Caco-2 (cell line): ENCODE measurements at regions of chr5 and their contacts with region 1.

Region 1: GRCh38 chr5:133111299-133111698 is 59.5 kb downstream of the HSPA4 start:
- DNase-seq: peak; percentile 77 to 85
- H3K4me3 ChIP-seq: no peak overlapping the region
- H3K4me3 Mint-ChIP-seq: no peak overlapping the region
- H3K27ac Mint-ChIP-seq: no peak overlapping the region
- H3K4me1 ChIP-seq: no peaks in the 10 kb centered on the region
- H3K4me1 Mint-ChIP-seq: peaks cover 8% of the 10 kb centered on the region
- H3K27me3 ChIP-seq: no peaks in the 10 kb centered on the region
- H3K27me3 Mint-ChIP-seq: no peaks in the 10 kb centered on the region
- CTCF ChIP-seq: peak; percentile 92 to 95

Region 2: DNA sequence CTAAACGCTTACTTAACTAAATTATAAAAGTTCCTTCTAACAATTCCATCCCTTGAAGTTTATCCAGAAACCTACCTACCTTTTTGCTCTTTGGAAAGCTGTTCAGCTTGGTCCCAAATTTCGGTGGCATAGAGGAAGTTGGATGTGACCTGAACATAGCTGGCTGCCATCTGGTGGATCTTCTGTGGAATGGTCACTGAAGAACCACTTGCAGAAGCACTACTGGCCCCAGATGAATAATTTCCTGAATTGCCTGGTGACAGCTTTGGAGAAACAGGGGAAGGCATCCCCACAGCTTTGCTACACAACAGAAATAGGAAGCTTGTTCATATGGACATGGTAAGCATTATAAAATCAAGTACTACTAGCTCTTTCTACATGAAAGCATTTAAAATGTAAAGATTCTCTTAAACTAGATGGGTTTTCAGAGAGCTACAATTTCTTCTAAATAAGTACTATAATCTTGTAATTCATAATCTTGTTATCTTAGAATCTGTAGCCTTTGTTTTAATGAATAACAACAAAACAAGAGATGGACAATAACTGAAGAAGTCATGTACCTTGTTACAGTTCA is 228.0 kb before region 1 on chr5:
- CTCF ChIA-PET with region 1: no interaction called
- POLR2A ChIA-PET with region 1: no interaction called
- intact Hi-C with region 1: no loop called
- DNase-seq: peak; percentile 70 to 74
- H3K4me3 ChIP-seq: no peak overlapping the region
- H3K4me3 Mint-ChIP-seq: no peak overlapping the region
- H3K27ac Mint-ChIP-seq: no peak overlapping the region
- H3K4me1 ChIP-seq: no peaks in the 10 kb centered on the region
- H3K4me1 Mint-ChIP-seq: peaks cover 14% of the 10 kb centered on the region
- H3K27me3 ChIP-seq: no peaks in the 10 kb centered on the region
- H3K27me3 Mint-ChIP-seq: no peaks in the 10 kb centered on the region
- CTCF ChIP-seq: peak; percentile 31 to 81

Region 3: GRCh38 chr5:133123297-133123696 is 12.0 kb after region 1 on chr5:
- CTCF ChIA-PET with region 1: no interaction called
- POLR2A ChIA-PET with region 1: no interaction called
- intact Hi-C with region 1: no loop called
- DNase-seq: no peak
- H3K4me3 ChIP-seq: no peak overlapping the region
- H3K4me3 Mint-ChIP-seq: no peak overlapping the region
- H3K27ac Mint-ChIP-seq: no peak overlapping the region
- H3K4me1 ChIP-seq: no peaks in the 10 kb centered on the region
- H3K4me1 Mint-ChIP-seq: no peaks in the 10 kb centered on the region
- H3K27me3 ChIP-seq: no peaks in the 10 kb centered on the region; the same call in 1 of the 2 replicates
- H3K27me3 Mint-ChIP-seq: peaks cover 4% of the 10 kb centered on the region
- CTCF ChIP-seq: no peak

Region 4: GRCh38 chr5:133247881-133248624 is 136.8 kb after region 1 on chr5:
- CTCF ChIA-PET with region 1: interaction called, 32 read pairs
- POLR2A ChIA-PET with region 1: interaction called, 7 read pairs
- intact Hi-C with region 1: loop called (anchors 1 kb)
- DNase-seq: peak; percentile 79 to 82
- H3K4me3 ChIP-seq: no peak overlapping the region
- H3K4me3 Mint-ChIP-seq: no peak overlapping the region
- H3K27ac Mint-ChIP-seq: no peak overlapping the region
- H3K4me1 ChIP-seq: no peaks in the 10 kb centered on the region
- H3K4me1 Mint-ChIP-seq: no peaks in the 10 kb centered on the region
- H3K27me3 ChIP-seq: no peaks in the 10 kb centered on the region
- H3K27me3 Mint-ChIP-seq: no peaks in the 10 kb centered on the region
- CTCF ChIP-seq: peak; percentile 87 to 98

Region 5: GRCh38 chr5:133287500-133287899 is 176.2 kb after region 1 on chr5:
- CTCF ChIA-PET with region 1: interaction called, 6 read pairs
- POLR2A ChIA-PET with region 1: no interaction called
- intact Hi-C with region 1: loop called (anchors 1 kb)
- DNase-seq: peak in 1 of 2 experiments; percentile 8
- H3K4me3 ChIP-seq: no peak overlapping the region
- H3K4me3 Mint-ChIP-seq: no peak overlapping the region
- H3K27ac Mint-ChIP-seq: no peak overlapping the region
- H3K4me1 ChIP-seq: 0 out of 2 replicates have a peak, but pooled peaks cover under 1% of the 10 kb centered on the region
- H3K4me1 Mint-ChIP-seq: peaks cover 6% of the 10 kb centered on the region
- H3K27me3 ChIP-seq: no peaks in the 10 kb centered on the region
- H3K27me3 Mint-ChIP-seq: no peaks in the 10 kb centered on the region
- CTCF ChIP-seq: peak in 1 of 2 experiments; percentile 59

Region 6: GRCh38 chr5:133319905-133320520 is 208.7 kb after region 1 on chr5:
- CTCF ChIA-PET with region 1: interaction called, 4 read pairs
- POLR2A ChIA-PET with region 1: no interaction called
- intact Hi-C with region 1: loop called (anchors 1 kb)
- DNase-seq: peak in 1 of 2 experiments; percentile 30
- H3K4me3 ChIP-seq: no peak overlapping the region
- H3K4me3 Mint-ChIP-seq: no peak overlapping the region
- H3K27ac Mint-ChIP-seq: no peak overlapping the region
- H3K4me1 ChIP-seq: no peaks in the 10 kb centered on the region
- H3K4me1 Mint-ChIP-seq: no peaks in the 10 kb centered on the region
- H3K27me3 ChIP-seq: no peaks in the 10 kb centered on the region
- H3K27me3 Mint-ChIP-seq: peaks cover 2% of the 10 kb centered on the region
- CTCF ChIP-seq: peak; percentile 23 to 52

Region 7: DNA sequence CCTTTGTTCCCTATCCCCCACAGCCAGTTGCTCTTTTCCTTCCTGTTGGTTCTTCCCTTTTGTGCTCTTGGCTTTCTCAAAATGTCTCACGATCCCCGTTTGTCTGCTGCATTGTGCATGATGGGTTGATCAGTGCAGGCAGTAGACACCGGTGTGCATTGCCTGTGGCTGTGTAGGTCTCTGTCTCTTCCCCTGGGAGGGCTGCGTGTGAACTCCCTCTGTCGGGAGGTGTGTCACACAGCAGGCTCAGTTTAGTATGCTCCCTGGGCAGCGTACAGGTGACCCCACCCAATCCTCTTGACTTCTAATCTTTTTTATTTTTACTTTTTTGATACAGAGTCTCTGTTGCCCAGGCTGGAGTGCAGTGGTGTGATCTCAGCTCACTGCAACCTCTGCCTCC is 235.7 kb after region 1 on chr5:
- CTCF ChIA-PET with region 1: no interaction called
- POLR2A ChIA-PET with region 1: no interaction called
- intact Hi-C with region 1: loop called (anchors 1 kb)
- DNase-seq: peak; percentile 49 to 54
- H3K4me3 ChIP-seq: no peak overlapping the region
- H3K4me3 Mint-ChIP-seq: no peak overlapping the region
- H3K27ac Mint-ChIP-seq: no peak overlapping the region
- H3K4me1 ChIP-seq: no peaks in the 10 kb centered on the region
- H3K4me1 Mint-ChIP-seq: peaks cover 6% of the 10 kb centered on the region
- H3K27me3 ChIP-seq: no peaks in the 10 kb centered on the region
- H3K27me3 Mint-ChIP-seq: peaks cover 7% of the 10 kb centered on the region
- CTCF ChIP-seq: peak; percentile 41 to 65